ENCODE measurements at regions of chr1 and their contacts with region 1.

Region 1: GRCh38 chr1:200302192-200302920 is 107.5 kb downstream of the ZNF281 start:
- DNase-seq: no peak
- ATAC-seq: peak; percentile 23

Region 2: GRCh38 chr1:199684686-199685273 is 617.6 kb before region 1 on chr1:
- intact Hi-C with region 1: loop called (anchors 5 kb)
- DNase-seq: no peak
- ATAC-seq: no peak

Region 3: GRCh38 chr1:199954699-199955098 is 347.7 kb before region 1 on chr1:
- intact Hi-C with region 1: loop called (anchors 2 kb)
- DNase-seq: no peak
- ATAC-seq: no peak

Region 4: GRCh38 chr1:200139661-200140250 is 162.6 kb before region 1 on chr1:
- intact Hi-C with region 1: loop called (anchors 5 kb)
- DNase-seq: no peak
- ATAC-seq: no peak

Region 5: GRCh38 chr1:200154069-200154767 is 148.1 kb before region 1 on chr1:
- intact Hi-C with region 1: no loop called
- DNase-seq: no peak
- ATAC-seq: no peak

Region 6: DNA sequence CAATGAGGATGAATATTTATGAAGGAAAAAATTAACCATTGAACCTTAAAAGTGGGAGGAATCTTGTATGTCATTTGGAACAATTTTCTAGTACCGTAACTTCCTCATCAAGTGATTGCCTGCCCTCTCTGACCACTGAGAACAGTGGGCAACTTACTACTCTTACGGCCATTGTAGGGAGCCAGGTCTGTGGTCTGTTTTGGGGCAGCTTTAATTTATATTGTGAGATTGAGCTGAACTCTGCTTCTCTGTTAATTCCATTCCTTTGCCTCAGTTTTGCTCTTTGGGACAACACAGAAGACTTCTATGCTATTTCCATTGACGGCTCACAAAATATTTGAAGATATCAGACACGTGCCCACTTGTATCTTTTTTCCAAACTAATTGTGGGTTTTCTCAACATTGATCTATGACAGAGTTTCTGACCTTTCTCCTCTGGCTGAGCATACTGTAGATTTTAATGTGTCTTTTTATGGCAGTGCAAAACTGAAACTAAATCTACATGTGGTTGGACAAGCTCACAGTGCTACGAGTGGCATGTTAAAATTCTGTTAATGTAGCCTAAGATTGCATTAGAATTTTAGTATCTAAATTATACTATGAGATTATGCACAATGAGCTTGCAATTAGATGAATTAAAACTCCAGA is 135.3 kb after region 1 on chr1:
- intact Hi-C with region 1: no loop called
- DNase-seq: no peak
- ATAC-seq: no peak

Region 7: DNA sequence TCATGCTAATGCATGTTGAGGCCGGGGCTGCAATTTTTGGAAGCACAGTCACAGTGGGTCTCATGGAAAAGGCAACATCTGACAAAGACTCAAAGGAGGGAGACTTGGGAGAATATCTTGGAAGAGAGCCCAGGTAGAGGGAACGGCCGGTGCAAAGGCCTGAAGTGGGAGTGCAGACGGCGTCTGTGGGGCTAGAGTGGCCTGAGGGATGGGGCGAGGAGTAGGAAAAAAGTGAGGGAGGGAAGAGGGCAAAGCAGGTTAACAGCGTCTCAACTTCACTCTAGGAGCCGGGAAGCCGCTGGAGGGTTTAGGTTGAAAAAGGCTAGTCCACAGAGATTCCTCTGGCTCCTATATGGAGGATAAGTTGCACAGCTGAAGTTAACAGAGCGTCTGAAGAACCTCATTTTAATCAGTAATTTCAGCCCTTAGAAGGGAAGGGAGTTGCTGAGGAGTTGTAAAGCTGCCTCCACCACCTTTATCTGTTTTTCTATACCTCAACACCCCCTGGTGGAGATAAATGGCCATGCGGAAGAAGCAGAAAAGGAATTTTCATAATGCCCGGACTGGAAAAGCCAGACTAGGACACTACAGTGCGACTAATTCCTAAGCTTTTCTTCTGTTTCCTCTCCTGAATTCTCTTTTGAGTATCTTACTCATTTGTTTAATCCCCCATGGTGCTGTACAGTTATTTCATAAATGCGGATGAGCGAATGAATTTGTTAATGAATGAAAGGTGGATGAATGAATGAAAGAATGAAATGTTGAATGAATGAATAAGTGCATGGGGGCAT is 186.2 kb after region 1 on chr1:
- intact Hi-C with region 1: loop called (anchors 10 kb)
- DNase-seq: no peak
- ATAC-seq: peak; percentile 62

Measured in Right ventricle myocardium inferior (tissue), 1 donor.